ENCODE measurements at regions of chr3 and their contacts with region 1.

Region 1: GRCh38 chr3:14508961-14509795 is 31.0 kb downstream of the GRIP2 start:
- DNase-seq: peak; percentile 18
- ATAC-seq: peak; percentile 93
- H3K4me3 ChIP-seq: no peak overlapping the region
- H3K27ac ChIP-seq: no peak overlapping the region
- H3K4me1 ChIP-seq: no peaks in the 10 kb centered on the region
- H3K27me3 ChIP-seq: peaks cover 17% of the 10 kb centered on the region
- CTCF ChIP-seq: peak; percentile 71
- POLR2A ChIP-seq: no peak
- RAD21 ChIP-seq: peak; percentile 68

Region 2: GRCh38 chr3:14548321-14548729 is 39.1 kb after region 1 on chr3:
- CTCF ChIA-PET with region 1: interaction called, 6 read pairs
- POLR2A ChIA-PET with region 1: no interaction called
- dilution Hi-C with region 1: no loop called
- in situ Hi-C with region 1: no loop called
- intact Hi-C with region 1: loop called (anchors 1 kb)
- DNase-seq: peak; percentile 56
- ATAC-seq: peak; percentile 92
- H3K4me3 ChIP-seq: no peak overlapping the region
- H3K27ac ChIP-seq: no peak overlapping the region
- H3K4me1 ChIP-seq: no peaks in the 10 kb centered on the region
- H3K27me3 ChIP-seq: peaks cover 33% of the 10 kb centered on the region
- CTCF ChIP-seq: peak; percentile 70
- POLR2A ChIP-seq: no peak
- RAD21 ChIP-seq: peak; percentile 75

Region 3: DNA sequence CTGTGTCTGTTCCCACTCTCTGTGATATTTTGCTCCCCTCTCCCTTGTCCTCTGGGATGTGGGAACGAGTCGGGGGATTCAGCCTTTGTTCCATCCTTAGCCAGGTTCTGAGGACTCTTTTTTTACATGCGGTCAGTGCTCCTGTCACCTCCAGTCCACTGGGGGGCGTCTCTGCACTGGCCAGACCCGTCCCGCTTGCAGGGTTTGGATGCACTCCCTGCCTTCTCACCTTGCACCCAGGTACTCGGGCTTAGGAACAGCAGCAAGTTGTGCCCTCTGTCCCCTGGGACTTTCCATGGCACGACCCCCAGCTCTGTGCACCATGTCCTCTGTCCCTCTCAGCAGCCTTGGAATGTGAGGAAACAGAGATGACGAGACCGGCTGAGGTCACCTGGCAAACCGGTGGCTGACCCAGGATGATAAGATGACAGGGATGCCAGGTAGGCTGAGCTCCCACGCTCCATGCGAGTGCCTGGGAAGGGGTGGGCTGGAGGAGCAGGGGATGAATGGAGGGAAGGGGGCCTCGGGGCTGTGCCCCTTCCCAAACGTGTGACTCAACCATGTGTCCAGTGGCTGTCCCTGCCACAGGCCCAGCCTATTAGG is 282.3 kb after region 1 on chr3:
- CTCF ChIA-PET with region 1: no interaction called
- POLR2A ChIA-PET with region 1: no interaction called
- dilution Hi-C with region 1: no loop called
- in situ Hi-C with region 1: no loop called
- intact Hi-C with region 1: no loop called
- DNase-seq: peak; percentile 12
- ATAC-seq: peak; percentile 57
- H3K4me3 ChIP-seq: no peak overlapping the region
- H3K27ac ChIP-seq: no peak overlapping the region
- H3K4me1 ChIP-seq: no peaks in the 10 kb centered on the region
- H3K27me3 ChIP-seq: peaks cover 30% of the 10 kb centered on the region
- CTCF ChIP-seq: peak; percentile 41
- POLR2A ChIP-seq: no peak
- RAD21 ChIP-seq: peak; percentile 35